Right ventricle myocardium inferior (tissue), 1 donor: ENCODE measurements at regions of chr9 and their contacts with region 1.

Region 1: GRCh38 chr9:114108016-114108833 is 9.1 kb upstream of the KIF12 start:
- DNase-seq: peak; percentile 84
- ATAC-seq: peak; percentile 94

Region 2: GRCh38 chr9:113026200-113026599 is 1082.0 kb before region 1 on chr9:
- intact Hi-C with region 1: no loop called
- DNase-seq: no peak
- ATAC-seq: no peak

Region 3: DNA sequence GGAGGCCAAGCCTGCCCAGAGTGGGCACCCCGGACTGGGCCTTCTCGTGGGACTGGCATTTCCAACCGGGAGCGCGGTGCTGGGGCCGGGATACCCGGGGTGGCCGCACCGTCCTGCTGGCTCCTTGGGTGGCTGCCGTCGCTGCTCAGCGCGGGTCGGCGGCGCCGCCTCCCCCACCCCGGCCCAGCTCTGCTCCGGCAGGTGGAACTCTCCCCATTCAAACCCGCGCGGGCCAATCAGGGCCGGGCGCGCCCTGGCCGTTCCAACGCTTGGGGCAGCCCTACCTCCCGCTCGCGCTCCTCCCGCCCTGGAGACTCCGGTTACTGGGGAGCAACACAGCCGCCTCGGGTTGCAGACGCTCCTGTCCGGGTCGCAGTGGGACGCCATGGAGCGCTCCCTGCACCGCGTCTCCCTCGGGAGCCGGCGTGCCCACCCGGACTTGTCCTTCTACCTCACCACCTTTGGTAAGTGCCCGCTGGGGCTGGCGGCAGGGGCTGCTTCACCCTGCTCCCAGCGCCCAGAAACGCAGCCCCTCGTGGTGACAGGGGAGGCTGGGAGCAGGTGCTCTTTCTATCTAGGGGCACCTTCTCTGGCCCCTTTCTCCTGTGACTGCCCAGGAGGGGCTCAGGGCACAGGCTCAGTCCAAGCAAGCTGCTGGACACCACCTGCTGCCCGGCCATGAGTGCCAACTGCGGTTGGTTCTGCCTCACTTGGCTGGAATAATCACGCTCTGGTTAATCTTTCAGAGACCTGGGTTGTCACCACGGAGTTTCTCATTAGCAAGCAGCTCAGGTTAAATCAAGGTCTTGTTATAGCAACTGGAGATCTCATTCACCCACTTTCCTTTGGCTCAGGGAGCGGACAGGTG is 644.6 kb before region 1 on chr9 and contains the start of gene RGS3:
- intact Hi-C with region 1: no loop called
- DNase-seq: no peak
- ATAC-seq: peak; percentile 96
- total RNA-seq, gene RGS3: 139 TPM

Region 4: GRCh38 chr9:114271641-114272081 is 163.4 kb after region 1 on chr9:
- intact Hi-C with region 1: loop called (anchors 1 kb)
- DNase-seq: no peak
- ATAC-seq: peak; percentile 66

Region 5: DNA sequence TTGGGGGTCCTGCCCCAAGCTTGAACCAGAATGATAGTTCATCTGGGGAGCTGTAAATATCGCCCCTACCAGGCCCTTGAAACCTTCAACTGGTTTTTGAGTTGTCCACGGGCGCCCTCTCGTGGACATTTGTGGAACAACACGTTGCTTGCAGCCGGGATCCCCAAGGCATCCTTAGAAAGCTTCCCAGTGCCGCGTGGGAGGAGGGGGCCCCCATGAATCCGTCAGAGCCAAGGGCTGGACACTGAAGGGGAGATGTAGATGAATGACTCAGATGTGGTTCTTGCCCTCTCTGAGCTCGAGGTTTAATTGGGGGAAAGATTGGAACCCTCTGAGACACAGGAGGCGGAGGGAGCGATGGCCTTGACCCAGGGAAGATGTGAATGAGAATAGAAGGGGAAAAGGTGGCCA is 182.8 kb after region 1 on chr9:
- intact Hi-C with region 1: loop called (anchors 2 kb)
- DNase-seq: peak; percentile 87
- ATAC-seq: peak; percentile 58